CD8-positive, alpha-beta memory T cell (primary cell): ENCODE measurements at regions of chr12 and their contacts with region 1.

Region 1: DNA sequence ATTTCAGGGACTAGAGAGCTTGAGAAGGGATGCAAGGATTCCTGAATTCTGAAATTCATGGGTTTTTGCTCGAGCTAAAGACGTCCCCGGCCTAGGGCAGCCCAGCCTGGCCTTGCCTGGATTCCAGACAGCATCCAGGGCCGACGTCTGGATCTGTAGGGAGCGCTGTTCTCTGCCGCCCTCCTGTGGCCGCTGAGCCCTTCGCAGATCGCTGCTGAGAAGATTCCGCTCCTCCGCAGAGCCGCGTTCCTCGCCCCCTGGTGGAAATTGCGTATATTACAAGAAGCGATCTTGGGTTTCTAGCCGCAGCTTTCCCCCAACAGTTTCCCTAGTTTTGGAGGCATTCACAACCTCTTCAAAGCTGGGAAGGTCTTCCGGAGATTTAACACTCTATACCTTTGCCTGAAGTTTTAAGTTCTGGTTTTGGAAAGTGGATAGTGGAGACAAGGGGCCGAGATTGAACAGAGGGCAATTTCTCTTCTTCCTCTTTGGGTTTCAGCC is 5.1 kb downstream of the CISTR start:
- DNase-seq: peak; percentile 82 to 91 (median 86)
- H3K4me3 ChIP-seq: no peak overlapping the region
- H3K4me3 Mint-ChIP-seq: peak overlapping the region; percentile 17 to 66 (median 51)
- H3K27ac ChIP-seq: no peak overlapping the region
- H3K27ac Mint-ChIP-seq: peak overlapping the region in 2 of 8 donors; percentile 13 to 70
- H3K4me1 ChIP-seq: peaks cover 17% of the 10 kb centered on the region
- H3K4me1 Mint-ChIP-seq: peaks cover 5 to 7% (median 6%) of the 10 kb centered on the region in 3 donors
- H3K27me3 ChIP-seq: peaks cover 37% of the 10 kb centered on the region
- H3K27me3 Mint-ChIP-seq: peaks cover 19 to 57% of the 10 kb centered on the region in 2 donors

Region 2: DNA sequence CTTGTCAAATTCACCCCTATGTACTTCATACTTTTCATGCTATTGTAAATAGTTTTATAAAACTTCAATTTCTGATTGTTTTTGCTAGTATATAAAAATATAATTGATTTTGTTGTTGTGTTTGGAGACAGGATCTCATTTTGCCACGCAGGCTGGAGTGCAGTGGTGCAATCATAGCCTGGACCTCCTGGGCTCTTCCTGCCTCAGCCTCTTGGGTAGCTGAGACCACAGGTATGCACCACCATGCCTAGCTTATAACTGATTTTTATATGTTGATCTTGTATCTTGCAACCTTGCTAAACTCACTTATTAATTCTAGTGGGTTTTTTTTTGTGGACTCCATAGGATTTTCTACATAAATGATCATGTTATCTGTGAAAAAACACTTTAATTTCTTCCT is 94.3 kb before region 1 on chr12:
- CTCF ChIA-PET with region 1: no interaction called
- POLR2A ChIA-PET with region 1: no interaction called
- DNase-seq: no peak
- H3K4me3 ChIP-seq: no peak overlapping the region
- H3K4me3 Mint-ChIP-seq: no peak overlapping the region
- H3K27ac ChIP-seq: no peak overlapping the region
- H3K27ac Mint-ChIP-seq: no peak overlapping the region
- H3K4me1 ChIP-seq: no peaks in the 10 kb centered on the region
- H3K4me1 Mint-ChIP-seq: no peaks in the 10 kb centered on the region
- H3K27me3 ChIP-seq: no peaks in the 10 kb centered on the region
- H3K27me3 Mint-ChIP-seq: peaks cover 0 to 3% of the 10 kb centered on the region in 2 donors

Region 3: DNA sequence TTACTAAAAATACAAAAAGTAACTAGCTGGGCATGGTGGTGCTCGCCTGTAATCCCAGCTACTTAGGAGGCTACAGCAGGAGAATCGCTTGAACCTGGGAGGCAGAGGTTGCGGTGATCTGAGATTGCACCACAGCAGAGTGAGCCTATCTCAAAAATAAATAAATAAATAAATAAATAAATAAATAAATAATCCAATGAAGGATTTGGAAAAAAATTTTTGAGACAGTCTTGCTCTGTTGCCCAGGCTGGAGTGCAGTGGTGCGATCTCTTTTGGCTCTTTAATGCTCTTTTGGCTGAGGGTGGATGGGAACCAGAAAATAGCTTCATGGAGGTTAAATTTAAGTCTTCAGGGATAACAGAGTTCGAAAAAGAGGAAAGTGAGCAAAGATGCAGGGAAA is 82.5 kb before region 1 on chr12:
- CTCF ChIA-PET with region 1: no interaction called
- POLR2A ChIA-PET with region 1: no interaction called
- DNase-seq: no peak
- H3K4me3 ChIP-seq: no peak overlapping the region
- H3K4me3 Mint-ChIP-seq: no peak overlapping the region
- H3K27ac ChIP-seq: no peak overlapping the region
- H3K27ac Mint-ChIP-seq: peak overlapping the region in 3 of 8 donors; percentile 18 to 84 (median 26)
- H3K4me1 ChIP-seq: no peaks in the 10 kb centered on the region
- H3K4me1 Mint-ChIP-seq: no peaks in the 10 kb centered on the region
- H3K27me3 ChIP-seq: no peaks in the 10 kb centered on the region
- H3K27me3 Mint-ChIP-seq: no peaks in the 10 kb centered on the region

Region 4: DNA sequence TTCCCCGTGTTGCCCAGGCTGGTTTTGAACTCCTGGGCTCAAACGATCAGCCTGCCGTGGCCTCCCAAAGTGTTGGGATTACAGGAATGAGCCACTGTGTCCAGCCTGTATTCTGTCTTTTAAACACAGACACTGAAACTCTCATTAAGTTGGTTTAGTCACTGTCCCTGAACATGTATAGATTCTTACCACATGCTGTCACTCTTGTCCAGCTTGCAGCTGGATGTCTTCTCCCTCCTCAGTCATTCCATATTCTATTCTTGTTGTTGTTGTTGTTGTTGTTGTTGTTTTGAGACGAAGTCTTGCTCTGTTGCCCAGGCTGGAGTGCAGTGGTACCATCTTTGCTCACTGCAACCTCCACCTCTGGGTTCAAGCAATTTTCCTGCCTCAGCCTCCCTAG is 58.5 kb before region 1 on chr12:
- CTCF ChIA-PET with region 1: interaction called, 13 read pairs
- POLR2A ChIA-PET with region 1: no interaction called
- DNase-seq: no peak
- H3K4me3 ChIP-seq: no peak overlapping the region
- H3K4me3 Mint-ChIP-seq: no peak overlapping the region
- H3K27ac ChIP-seq: no peak overlapping the region
- H3K27ac Mint-ChIP-seq: peak overlapping the region in 1 of 8 donors; percentile 56
- H3K4me1 ChIP-seq: no peaks in the 10 kb centered on the region
- H3K4me1 Mint-ChIP-seq: no peaks in the 10 kb centered on the region
- H3K27me3 ChIP-seq: peaks cover 5% of the 10 kb centered on the region
- H3K27me3 Mint-ChIP-seq: peaks cover 14 to 39% of the 10 kb centered on the region in 2 donors

Region 5: GRCh38 chr12:53701518-53702260 is 45.0 kb before region 1 on chr12:
- CTCF ChIA-PET with region 1: interaction called, 238 read pairs
- POLR2A ChIA-PET with region 1: interaction called, 4 read pairs
- DNase-seq: peak; percentile 58 to 83 (median 68)
- H3K4me3 ChIP-seq: no peak overlapping the region
- H3K4me3 Mint-ChIP-seq: peak overlapping the region in 1 of 7 donors; percentile 14
- H3K27ac ChIP-seq: no peak overlapping the region
- H3K27ac Mint-ChIP-seq: peak overlapping the region in 1 of 8 donors; percentile 51
- H3K4me1 ChIP-seq: peaks cover 2% of the 10 kb centered on the region
- H3K4me1 Mint-ChIP-seq: peaks cover 3 to 6% (median 6%) of the 10 kb centered on the region in 3 donors
- H3K27me3 ChIP-seq: peaks cover 49% of the 10 kb centered on the region
- H3K27me3 Mint-ChIP-seq: peaks cover 33 to 88% of the 10 kb centered on the region in 2 donors

Region 6: GRCh38 chr12:53727310-53728041 is 19.2 kb before region 1 on chr12 and contains the start of gene CALCOCO1:
- CTCF ChIA-PET with region 1: interaction called, 269 read pairs
- POLR2A ChIA-PET with region 1: interaction called, 4 read pairs
- DNase-seq: peak; percentile 94 to 97 (median 96)
- H3K4me3 ChIP-seq: peak within 1 kb of the TSS; percentile 97
- H3K4me3 Mint-ChIP-seq: peak within 1 kb of the TSS; percentile 89 to 97 (median 94)
- H3K27ac ChIP-seq: peak within 1 kb of the TSS; percentile 64
- H3K27ac Mint-ChIP-seq: peak within 1 kb of the TSS; percentile 49 to 98 (median 92)
- H3K4me1 ChIP-seq: peaks cover 23% of the 10 kb centered on the region
- H3K4me1 Mint-ChIP-seq: peaks cover 28 to 45% (median 39%) of the 10 kb centered on the region in 3 donors
- H3K27me3 ChIP-seq: no peaks in the 10 kb centered on the region
- H3K27me3 Mint-ChIP-seq: peaks cover 3 to 7% of the 10 kb centered on the region in 2 donors
- total RNA-seq, gene CALCOCO1: 29.5 to 31.4 TPM

Region 7: DNA sequence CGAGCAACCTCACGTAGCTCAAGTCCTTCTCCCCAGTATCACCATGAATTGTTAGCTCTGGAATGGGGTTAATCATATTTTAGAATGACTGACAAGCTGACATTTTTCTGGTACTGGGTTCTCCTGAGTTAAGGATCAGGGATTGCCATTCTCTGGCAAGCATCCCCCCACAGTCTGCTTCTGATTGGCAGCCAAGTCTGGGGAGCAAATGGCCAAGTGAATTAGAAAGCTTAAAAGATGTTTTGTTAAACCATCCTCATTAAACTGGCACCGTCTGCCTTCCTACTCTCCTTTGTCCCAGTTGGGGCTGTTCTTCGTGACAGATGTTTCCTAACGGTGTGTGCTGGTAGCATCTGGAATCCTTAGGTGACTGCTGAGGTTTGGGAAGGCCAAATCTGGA is 22.3 kb after region 1 on chr12:
- CTCF ChIA-PET with region 1: no interaction called
- POLR2A ChIA-PET with region 1: no interaction called
- DNase-seq: no peak
- H3K4me3 ChIP-seq: no peak overlapping the region
- H3K4me3 Mint-ChIP-seq: no peak overlapping the region
- H3K27ac ChIP-seq: no peak overlapping the region
- H3K27ac Mint-ChIP-seq: no peak overlapping the region
- H3K4me1 ChIP-seq: no peaks in the 10 kb centered on the region
- H3K4me1 Mint-ChIP-seq: no peaks in the 10 kb centered on the region
- H3K27me3 ChIP-seq: peaks cover 8% of the 10 kb centered on the region
- H3K27me3 Mint-ChIP-seq: peaks cover 29 to 76% of the 10 kb centered on the region in 2 donors

Region 8: DNA sequence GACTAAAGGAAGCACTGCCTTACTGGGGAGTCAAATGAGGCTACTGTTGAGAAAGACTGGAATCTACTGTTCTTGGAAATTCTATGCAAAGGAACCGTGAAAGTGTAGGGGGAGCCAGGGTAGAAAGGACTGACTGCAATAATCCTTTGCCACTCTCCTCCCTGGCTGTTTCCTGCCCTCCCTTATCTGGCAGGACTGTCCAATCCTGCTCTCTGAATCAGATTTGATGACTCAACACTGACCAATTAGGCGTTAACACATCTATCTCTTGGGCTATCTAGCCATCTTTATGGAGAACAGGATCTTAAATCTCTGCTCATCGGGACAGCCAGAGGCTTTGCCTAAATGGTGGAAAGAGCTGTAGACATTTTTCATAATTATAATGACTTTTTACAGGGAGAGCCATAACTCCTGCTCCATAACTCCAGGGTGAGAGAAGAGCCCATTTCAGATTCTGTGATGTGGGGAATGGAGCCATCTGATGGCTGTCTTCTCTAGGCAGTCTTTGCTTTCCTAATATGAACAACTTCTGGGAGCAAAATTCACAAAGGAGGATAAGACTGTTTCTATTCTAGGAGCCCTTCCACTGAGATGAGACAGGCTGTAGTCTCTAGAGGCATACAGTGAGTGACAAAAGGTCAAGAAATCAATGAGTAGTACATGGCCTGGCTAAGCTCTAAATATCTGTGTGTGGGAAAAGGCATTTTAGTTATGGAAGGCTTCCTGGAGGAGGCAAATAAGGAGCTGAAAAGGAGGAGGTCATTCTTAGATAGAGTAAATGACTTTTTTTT is 74.1 kb after region 1 on chr12:
- CTCF ChIA-PET with region 1: no interaction called
- POLR2A ChIA-PET with region 1: no interaction called
- DNase-seq: no peak
- H3K4me3 ChIP-seq: no peak overlapping the region
- H3K4me3 Mint-ChIP-seq: no peak overlapping the region
- H3K27ac ChIP-seq: no peak overlapping the region
- H3K27ac Mint-ChIP-seq: no peak overlapping the region
- H3K4me1 ChIP-seq: no peaks in the 10 kb centered on the region
- H3K4me1 Mint-ChIP-seq: no peaks in the 10 kb centered on the region
- H3K27me3 ChIP-seq: peaks cover 21% of the 10 kb centered on the region
- H3K27me3 Mint-ChIP-seq: peaks cover 51 to 85% of the 10 kb centered on the region in 2 donors